Activated T-helper 1 cell treated with anti-CD3 and anti-CD28 coated beads, Interleukin-12 subunit alpha, Interleukin-12 subunit beta, Interleukin-2, Interleukin-4 antibody, amounts not matched to agents 30 ng/mL and 10 ng/mL and 1 ng/mL, durations not matched to agents 14 hours and 24 hours and 36 hours (primary cell): ENCODE measurements at regions of chrX and their contacts with region 1.

Region 1: GRCh38 chrX:154490414-154491083 is at the start of gene SLC10A3:
- DNase-seq: peak; percentile 85
- H3K4me3 Mint-ChIP-seq: peak within 1 kb of the TSS; percentile 90
- H3K27ac Mint-ChIP-seq: peak within 1 kb of the TSS; percentile 92
- H3K4me1 Mint-ChIP-seq: peaks cover 10% of the 10 kb centered on the region
- H3K27me3 Mint-ChIP-seq: no peaks in the 10 kb centered on the region
- total RNA-seq, gene SLC10A3: 19.9 and 23.1 TPM in 2 replicates

Region 2: GRCh38 chrX:154370882-154371770 is 119.4 kb before region 1 on chrX:
- intact Hi-C with region 1: loop called (anchors 1 kb)
- DNase-seq: peak; percentile 88
- H3K4me3 Mint-ChIP-seq: peak overlapping the region; percentile 84
- H3K27ac Mint-ChIP-seq: peak overlapping the region; percentile 63
- H3K4me1 Mint-ChIP-seq: peaks cover 11% of the 10 kb centered on the region
- H3K27me3 Mint-ChIP-seq: no peaks in the 10 kb centered on the region

Region 3: DNA sequence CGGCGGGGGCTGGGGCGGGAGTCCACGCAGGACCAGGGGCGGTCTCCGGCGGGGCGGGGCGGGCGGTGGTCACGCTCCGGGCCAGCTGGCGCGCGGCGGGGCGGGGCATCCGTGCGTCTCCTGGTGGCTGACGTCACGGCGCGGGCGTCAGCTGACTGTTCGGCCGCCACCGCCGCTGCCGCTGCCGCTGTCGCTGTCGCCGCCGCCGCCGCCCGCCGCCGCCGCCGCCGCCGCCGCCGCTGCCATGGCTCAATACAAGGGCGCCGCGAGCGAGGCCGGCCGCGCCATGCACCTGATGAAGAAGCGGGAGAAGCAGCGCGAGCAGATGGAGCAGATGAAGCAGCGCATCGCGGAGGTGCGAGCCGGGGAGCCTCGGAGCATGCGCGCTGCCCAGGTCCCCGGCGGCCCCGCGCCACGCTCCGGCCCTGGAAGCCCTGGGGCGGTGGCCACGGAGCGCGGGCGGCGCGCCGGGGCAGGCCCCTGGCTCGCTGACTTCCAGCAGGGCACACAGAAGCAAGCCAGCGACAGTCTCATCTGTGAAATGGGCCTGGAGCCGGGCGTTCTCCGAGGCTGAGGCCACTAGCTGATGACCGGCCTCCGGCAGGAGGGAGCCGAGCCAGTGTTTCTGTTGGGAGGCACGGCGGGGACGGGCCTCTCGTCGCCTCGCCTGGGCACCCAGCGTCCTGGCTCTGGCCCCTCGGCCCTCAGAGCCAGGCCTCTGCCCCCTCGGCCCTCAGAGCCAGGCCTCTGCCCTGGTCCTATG is 46.4 kb before region 1 on chrX and contains the start of gene FAM50A:
- intact Hi-C with region 1: loop called (anchors 2 kb)
- DNase-seq: peak; percentile 73
- H3K4me3 Mint-ChIP-seq: peak within 1 kb of the TSS; percentile 78
- H3K27ac Mint-ChIP-seq: peak within 1 kb of the TSS; percentile 78
- H3K4me1 Mint-ChIP-seq: no peaks in the 10 kb centered on the region
- H3K27me3 Mint-ChIP-seq: no peaks in the 10 kb centered on the region
- total RNA-seq, gene FAM50A: 84.9 and 95.4 TPM in 2 replicates

Region 4: DNA sequence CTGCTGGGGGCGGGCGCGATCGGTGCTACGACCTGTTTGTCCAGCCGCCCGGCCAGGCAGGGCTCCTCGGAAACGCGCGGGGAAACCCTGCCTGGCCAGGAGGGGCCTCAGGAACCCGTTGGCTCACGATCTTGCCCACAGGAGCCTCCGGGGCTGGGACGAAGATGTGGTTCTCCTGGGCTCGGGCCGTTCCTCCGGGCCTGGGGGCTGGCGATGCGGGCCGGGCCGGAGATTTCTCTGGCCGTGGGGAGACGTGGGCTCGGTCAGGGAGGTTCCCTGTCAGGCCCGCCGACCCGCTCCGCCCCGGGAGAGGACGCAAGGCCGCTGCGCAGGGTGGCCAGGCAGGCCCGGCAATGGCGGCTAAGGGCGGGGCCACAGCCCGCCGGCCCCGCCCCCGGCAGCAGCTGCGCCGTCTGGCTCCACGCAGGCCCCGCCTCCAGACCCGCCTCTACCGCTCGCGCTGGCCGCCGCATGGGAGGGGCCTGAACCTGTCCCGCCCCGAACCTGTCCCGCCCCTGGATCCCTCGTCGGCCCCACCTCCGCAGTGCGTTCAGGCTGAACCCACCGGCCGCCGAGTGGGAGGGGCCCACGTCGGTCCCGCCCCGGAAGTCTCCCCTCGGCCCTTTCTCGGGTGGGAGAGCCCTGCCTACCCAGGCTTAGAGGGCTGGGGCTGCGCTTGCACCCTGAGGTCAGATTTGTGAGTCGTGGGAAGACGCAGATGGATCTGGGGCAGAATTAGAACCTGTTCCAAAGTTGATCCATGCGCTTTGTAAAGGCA is 25.5 kb after region 1 on chrX and contains the start of gene FAM3A:
- intact Hi-C with region 1: loop called (anchors 1 kb)
- DNase-seq: peak; percentile 87
- H3K4me3 Mint-ChIP-seq: peak within 1 kb of the TSS; percentile 87
- H3K27ac Mint-ChIP-seq: peak within 1 kb of the TSS; percentile 91
- H3K4me1 Mint-ChIP-seq: peaks cover 29% of the 10 kb centered on the region
- H3K27me3 Mint-ChIP-seq: no peaks in the 10 kb centered on the region
- total RNA-seq, gene FAM3A: 35.9 and 40.1 TPM in 2 replicates

Region 5: GRCh38 chrX:154547245-154548027 is 56.9 kb after region 1 on chrX and contains the start of gene IKBKG:
- intact Hi-C with region 1: loop called (anchors 1 kb)
- DNase-seq: peak; percentile 86
- H3K4me3 Mint-ChIP-seq: peak within 1 kb of the TSS; percentile 96
- H3K27ac Mint-ChIP-seq: peak within 1 kb of the TSS; percentile 98
- H3K4me1 Mint-ChIP-seq: peaks cover 33% of the 10 kb centered on the region
- H3K27me3 Mint-ChIP-seq: no peaks in the 10 kb centered on the region
- total RNA-seq, gene IKBKG: 40.7 and 41.2 TPM in 2 replicates